Activated CD4-positive, alpha-beta T cell treated with anti-CD3 and anti-CD28 coated beads for 36 hours (primary cell): ENCODE measurements at regions of chr5 and their contacts with region 1.

Region 1: DNA sequence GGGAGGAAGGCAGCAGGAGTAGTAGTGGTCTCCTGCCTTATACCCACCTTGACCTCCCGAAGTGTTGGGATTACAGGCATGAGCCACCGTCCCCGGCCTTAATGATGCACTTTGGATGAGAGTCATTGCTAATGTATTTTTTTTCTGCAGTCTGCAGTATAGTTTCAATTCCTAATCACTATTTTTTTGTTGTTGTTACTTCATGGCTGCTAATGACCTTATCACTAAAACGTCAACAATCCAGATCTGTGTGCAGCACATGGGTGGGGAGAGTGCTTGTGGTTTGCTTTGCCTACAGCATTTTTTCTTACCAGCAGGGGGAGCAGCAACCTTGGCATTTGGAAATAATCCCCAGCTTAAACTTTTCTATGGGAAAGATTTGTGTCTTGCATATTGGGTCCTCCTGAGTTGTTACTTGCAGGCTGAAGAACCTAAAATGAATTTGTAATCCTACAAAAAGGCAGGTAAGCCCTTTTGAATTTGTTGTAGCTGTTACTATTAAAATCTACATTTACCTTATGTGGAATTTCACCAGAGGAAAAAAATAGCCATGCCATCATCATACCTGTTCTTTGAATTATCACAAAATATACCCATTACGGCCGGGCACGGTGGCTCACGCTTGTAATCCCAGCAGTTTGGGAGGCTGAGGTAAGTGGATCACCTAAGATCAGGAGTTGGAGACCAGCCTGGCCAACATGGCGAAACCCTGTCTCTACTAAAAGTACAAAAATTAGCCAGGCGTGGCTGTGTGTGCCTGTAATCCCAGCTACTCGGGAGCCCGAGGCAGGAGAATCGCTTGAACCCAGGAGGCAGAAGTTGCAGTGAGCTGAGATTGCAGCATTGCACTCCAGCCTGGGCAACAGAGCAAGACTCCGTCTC is 6.3 kb upstream of the MED7 start:
- DNase-seq: peak; percentile 88
- ATAC-seq: peak; percentile 66
- H3K4me3 Mint-ChIP-seq: peak overlapping the region; percentile 2
- H3K27ac Mint-ChIP-seq: peak overlapping the region; percentile 74
- H3K4me1 Mint-ChIP-seq: peaks cover 48% of the 10 kb centered on the region
- H3K27me3 Mint-ChIP-seq: no peaks in the 10 kb centered on the region

Region 2: GRCh38 chr5:157159209-157159751 is 10.3 kb after region 1 on chr5:
- CTCF ChIA-PET with region 1: interaction called, 13 read pairs
- POLR2A ChIA-PET with region 1: no interaction called
- intact Hi-C with region 1: no loop called
- DNase-seq: peak; percentile 66
- ATAC-seq: peak; percentile 81
- H3K4me3 Mint-ChIP-seq: peak overlapping the region; percentile 64
- H3K27ac Mint-ChIP-seq: peak overlapping the region; percentile 99
- H3K4me1 Mint-ChIP-seq: peaks cover 71% of the 10 kb centered on the region
- H3K27me3 Mint-ChIP-seq: no peaks in the 10 kb centered on the region

Region 3: GRCh38 chr5:157180374-157181264 is 31.6 kb after region 1 on chr5 and contains the start of gene ITK:
- CTCF ChIA-PET with region 1: interaction called, 40 read pairs
- POLR2A ChIA-PET with region 1: interaction called, 11 read pairs
- intact Hi-C with region 1: loop called (anchors 2 kb)
- DNase-seq: peak; percentile 52
- ATAC-seq: peak; percentile 45
- H3K4me3 Mint-ChIP-seq: peak within 1 kb of the TSS; percentile 93
- H3K27ac Mint-ChIP-seq: peak within 1 kb of the TSS; percentile 100
- H3K4me1 Mint-ChIP-seq: peaks cover 43% of the 10 kb centered on the region
- H3K27me3 Mint-ChIP-seq: no peaks in the 10 kb centered on the region
- total RNA-seq, gene ITK: 208 to 249 TPM

Region 4: DNA sequence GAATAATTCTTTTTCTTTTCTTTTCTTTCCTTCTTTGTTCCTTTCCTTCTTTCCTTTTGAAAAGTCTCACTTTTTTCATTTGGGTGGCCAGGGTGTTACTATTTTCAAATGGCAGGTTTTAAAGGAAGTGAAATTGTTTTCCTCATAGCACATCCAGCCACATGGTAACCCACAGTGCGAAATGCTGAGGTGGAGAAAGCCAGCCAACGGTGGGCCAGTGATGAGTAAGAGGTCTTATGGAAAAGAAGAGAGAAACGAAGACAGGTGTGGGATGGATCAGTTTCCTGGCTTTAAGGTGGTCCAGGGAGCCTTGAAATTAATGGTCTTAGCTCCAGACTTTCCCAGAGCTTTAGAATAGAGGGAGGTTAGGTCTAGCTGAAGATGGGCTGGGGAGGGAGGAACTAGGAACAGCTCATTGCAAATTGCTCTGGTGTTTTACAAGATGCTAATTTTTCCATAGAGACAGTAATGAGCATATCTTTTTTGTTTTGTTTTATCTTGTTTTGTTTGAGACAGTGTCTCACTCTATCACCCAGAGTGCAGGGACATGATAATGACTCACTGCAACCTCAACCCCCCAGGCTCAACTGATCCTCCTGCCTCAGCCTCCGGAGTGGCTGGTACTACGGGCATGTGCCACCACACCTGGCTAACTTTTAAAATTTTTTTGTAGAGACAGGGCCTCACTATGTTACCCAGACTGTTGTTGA is 49.5 kb after region 1 on chr5:
- CTCF ChIA-PET with region 1: interaction called, 20 read pairs
- POLR2A ChIA-PET with region 1: interaction called, 3 read pairs
- intact Hi-C with region 1: no loop called
- DNase-seq: peak; percentile 75
- ATAC-seq: peak; percentile 78
- H3K4me3 Mint-ChIP-seq: peak overlapping the region; percentile 66
- H3K27ac Mint-ChIP-seq: peak overlapping the region; percentile 98
- H3K4me1 Mint-ChIP-seq: peaks cover 94% of the 10 kb centered on the region
- H3K27me3 Mint-ChIP-seq: no peaks in the 10 kb centered on the region

Region 5: DNA sequence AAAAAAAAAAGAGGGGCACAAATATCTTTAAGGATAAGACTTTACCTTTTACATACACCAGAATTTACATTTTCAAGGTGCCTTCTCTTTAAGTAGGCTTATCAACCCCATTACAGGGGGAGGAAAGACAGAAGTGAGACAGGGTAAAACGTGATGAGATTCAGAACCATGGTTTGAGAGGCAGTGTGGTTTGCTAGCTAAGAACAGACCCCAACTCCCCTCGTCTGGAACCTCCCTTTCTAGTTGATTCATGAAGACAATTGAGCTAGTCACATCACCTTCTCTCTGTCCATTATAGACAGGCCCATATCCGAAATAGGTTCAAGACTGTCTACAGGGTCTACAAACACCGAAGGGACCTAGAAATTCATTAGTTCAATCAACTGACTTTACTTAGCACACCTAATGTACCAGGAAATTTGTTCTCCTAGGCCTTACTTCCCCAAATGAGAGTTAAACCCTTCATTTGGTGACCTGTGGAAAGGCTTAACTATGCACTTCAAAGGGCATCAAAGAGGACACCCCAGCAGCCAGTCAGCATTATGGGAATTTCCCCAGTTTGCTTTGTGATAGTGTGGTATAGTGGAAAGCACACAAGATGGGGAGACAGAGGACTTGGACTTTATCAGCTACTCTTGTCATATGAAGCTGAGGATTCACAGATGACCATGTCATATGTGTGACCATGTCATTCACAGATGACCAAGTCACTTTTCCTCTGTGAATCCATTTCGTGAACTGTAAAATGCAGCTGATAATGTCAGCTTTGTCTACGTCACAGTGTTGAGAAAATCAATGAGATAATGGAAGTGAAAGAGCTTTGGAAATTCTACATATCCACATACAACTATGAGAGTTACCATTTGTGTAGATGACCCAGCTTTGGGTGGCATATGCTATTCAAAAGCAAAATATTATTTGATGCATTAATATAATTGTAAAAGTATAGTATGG is 76.8 kb after region 1 on chr5:
- CTCF ChIA-PET with region 1: interaction called, 20 read pairs
- POLR2A ChIA-PET with region 1: no interaction called
- intact Hi-C with region 1: loop called (anchors 1 to 2 kb)
- DNase-seq: no peak
- ATAC-seq: peak; percentile 30
- H3K4me3 Mint-ChIP-seq: peak overlapping the region; percentile 77
- H3K27ac Mint-ChIP-seq: peak overlapping the region; percentile 96
- H3K4me1 Mint-ChIP-seq: peaks cover 73% of the 10 kb centered on the region
- H3K27me3 Mint-ChIP-seq: no peaks in the 10 kb centered on the region

Region 6: DNA sequence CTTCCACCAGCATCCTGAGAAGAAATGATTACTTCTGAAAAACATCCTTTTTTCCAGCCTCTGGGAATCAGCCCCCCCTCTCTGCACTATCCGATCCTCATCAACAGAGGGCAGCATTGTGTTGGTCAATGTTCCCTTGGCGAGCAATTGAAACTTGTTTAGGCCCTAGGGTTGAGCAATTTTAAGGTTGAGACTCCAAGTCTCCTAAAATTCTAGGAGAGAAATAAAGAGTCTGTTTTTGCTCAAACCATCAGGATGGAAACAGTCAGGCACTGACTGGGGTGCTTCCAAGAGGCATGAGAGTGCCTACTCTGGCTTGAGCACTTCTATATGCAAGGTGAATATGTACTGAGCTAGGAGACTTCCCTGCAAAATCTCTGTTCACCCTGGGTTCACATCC is 104.6 kb after region 1 on chr5:
- CTCF ChIA-PET with region 1: interaction called, 31 read pairs
- POLR2A ChIA-PET with region 1: interaction called, 3 read pairs
- intact Hi-C with region 1: loop called in 1 of 2 experiments (anchors 2 kb)
- DNase-seq: no peak
- ATAC-seq: no peak
- H3K4me3 Mint-ChIP-seq: peak overlapping the region; percentile 10
- H3K27ac Mint-ChIP-seq: peak overlapping the region; percentile 89
- H3K4me1 Mint-ChIP-seq: peaks cover 96% of the 10 kb centered on the region
- H3K27me3 Mint-ChIP-seq: no peaks in the 10 kb centered on the region

Region 7: DNA sequence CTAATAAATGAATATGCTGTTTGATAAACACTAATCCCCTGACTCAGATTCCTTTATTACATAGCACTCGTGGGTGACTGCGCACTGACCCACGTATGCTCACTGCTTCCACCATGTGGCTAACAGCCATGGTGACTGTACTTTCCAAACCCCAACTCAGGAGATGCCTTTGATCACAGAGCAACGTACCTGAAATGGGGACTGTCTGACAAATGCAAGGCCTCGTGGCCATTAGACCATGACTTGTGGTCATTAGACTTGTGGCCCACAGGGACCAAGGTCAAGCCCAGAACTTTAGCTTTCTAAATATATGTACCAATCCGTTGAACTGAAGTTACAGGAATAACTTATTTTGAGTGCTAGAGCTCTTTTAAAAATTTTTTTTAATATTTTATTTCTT is 163.5 kb after region 1 on chr5:
- CTCF ChIA-PET with region 1: interaction called, 29 read pairs
- POLR2A ChIA-PET with region 1: no interaction called
- intact Hi-C with region 1: loop called (anchors 1 kb)
- DNase-seq: peak; percentile 76
- ATAC-seq: peak; percentile 95
- H3K4me3 Mint-ChIP-seq: no peak overlapping the region
- H3K27ac Mint-ChIP-seq: peak overlapping the region; percentile 83
- H3K4me1 Mint-ChIP-seq: peaks cover 36% of the 10 kb centered on the region
- H3K27me3 Mint-ChIP-seq: no peaks in the 10 kb centered on the region